CD8-positive, alpha-beta T cell (primary cell): ENCODE measurements at regions of chr5 and their contacts with region 1.

Region 1: GRCh38 chr5:42392917-42393316 is 30.3 kb upstream of the GHR start:
- DNase-seq: no peak
- ATAC-seq: no peak
- H3K4me3 ChIP-seq: no peak overlapping the region
- H3K4me3 Mint-ChIP-seq: no peak overlapping the region
- H3K27ac ChIP-seq: no peak overlapping the region
- H3K27ac Mint-ChIP-seq: no peak overlapping the region
- H3K4me1 ChIP-seq: no peaks in the 10 kb centered on the region
- H3K4me1 Mint-ChIP-seq: no peaks in the 10 kb centered on the region
- H3K27me3 ChIP-seq: no peaks in the 10 kb centered on the region
- H3K27me3 Mint-ChIP-seq: peaks cover 2% of the 10 kb centered on the region
- CTCF ChIP-seq: no peak

Region 2: GRCh38 chr5:42404366-42404765 is 11.4 kb after region 1 on chr5:
- CTCF ChIA-PET with region 1: no interaction called
- POLR2A ChIA-PET with region 1: no interaction called
- intact Hi-C with region 1: loop called in 1 of 2 experiments (anchors 1 kb)
- DNase-seq: no peak
- ATAC-seq: no peak
- H3K4me3 ChIP-seq: no peak overlapping the region
- H3K4me3 Mint-ChIP-seq: no peak overlapping the region
- H3K27ac ChIP-seq: no peak overlapping the region
- H3K27ac Mint-ChIP-seq: no peak overlapping the region
- H3K4me1 ChIP-seq: no peaks in the 10 kb centered on the region
- H3K4me1 Mint-ChIP-seq: no peaks in the 10 kb centered on the region
- H3K27me3 ChIP-seq: no peaks in the 10 kb centered on the region
- H3K27me3 Mint-ChIP-seq: no peaks in the 10 kb centered on the region
- CTCF ChIP-seq: no peak